ENCODE measurements at regions of chr7 and their contacts with region 1.

Region 1: GRCh38 chr7:37916673-37917660 is at the start of gene SFRP4:
- H3K4me3 Mint-ChIP-seq: peak within 1 kb of the TSS; percentile 68
- H3K27ac Mint-ChIP-seq: peak within 1 kb of the TSS; percentile 11
- H3K4me1 Mint-ChIP-seq: peaks cover 48% of the 10 kb centered on the region
- H3K27me3 Mint-ChIP-seq: peaks cover 64% of the 10 kb centered on the region

Region 2: DNA sequence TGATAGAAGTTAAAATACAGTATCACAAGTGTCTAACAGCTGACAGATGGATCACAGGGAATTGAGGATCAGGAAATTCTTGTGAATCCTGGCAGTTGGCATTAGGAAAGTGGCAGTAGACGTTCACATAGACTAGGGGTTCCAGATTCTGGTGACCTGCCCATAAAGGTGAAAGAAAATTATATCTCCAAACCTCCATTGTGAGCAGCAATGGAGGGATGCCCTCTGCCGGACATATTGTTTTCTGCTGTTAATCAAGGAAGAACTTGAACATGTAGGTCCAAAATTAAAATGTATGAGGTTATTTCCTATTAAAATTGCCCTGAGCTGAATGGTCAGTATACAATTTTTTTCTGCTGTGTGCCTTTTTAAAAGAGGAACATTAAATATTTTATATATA is 63.5 kb before region 1 on chr7:
- intact Hi-C with region 1: no loop called
- H3K4me3 Mint-ChIP-seq: no peak overlapping the region
- H3K27ac Mint-ChIP-seq: no peak overlapping the region
- H3K4me1 Mint-ChIP-seq: no peaks in the 10 kb centered on the region
- H3K27me3 Mint-ChIP-seq: no peaks in the 10 kb centered on the region

Region 3: DNA sequence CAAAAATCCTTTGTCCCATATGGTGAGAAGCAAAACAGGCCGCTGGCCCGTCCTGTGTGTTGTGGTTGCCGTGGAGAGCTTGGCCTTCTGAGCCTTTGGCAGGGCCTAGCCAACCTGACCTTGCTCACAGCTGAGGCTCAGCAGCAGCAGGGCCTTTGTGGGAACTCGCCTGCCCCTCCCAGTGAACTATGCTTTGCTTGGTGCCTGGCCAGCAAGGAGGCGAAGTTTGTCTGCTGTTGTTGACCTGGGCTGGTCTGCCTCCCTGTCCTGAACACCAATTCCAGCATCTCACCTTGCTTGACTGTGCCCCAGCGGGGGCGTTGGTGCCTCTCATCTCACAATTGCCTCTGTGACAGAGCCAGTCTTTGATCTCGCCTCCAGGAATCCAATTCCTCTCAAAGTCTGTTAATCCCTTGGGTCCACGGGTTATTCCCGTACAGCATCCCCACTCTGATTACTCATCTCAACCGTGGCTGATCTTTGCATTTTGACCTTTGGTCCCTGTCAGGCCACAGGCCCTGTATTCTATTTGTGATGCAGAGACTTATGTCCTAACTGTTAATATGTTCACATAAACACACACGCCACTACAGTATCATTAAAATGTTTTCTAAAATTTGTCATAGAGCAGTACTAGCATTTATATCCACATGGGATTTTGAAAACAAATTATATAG is 26.1 kb after region 1 on chr7:
- intact Hi-C with region 1: no loop called
- H3K4me3 Mint-ChIP-seq: no peak overlapping the region
- H3K27ac Mint-ChIP-seq: no peak overlapping the region
- H3K4me1 Mint-ChIP-seq: no peaks in the 10 kb centered on the region
- H3K27me3 Mint-ChIP-seq: no peaks in the 10 kb centered on the region

Region 4: GRCh38 chr7:37987732-37988131 is 70.8 kb after region 1 on chr7:
- intact Hi-C with region 1: loop called (anchors 5 kb)
- H3K4me3 Mint-ChIP-seq: no peak overlapping the region
- H3K27ac Mint-ChIP-seq: peak overlapping the region; percentile 83
- H3K4me1 Mint-ChIP-seq: peaks cover 40% of the 10 kb centered on the region
- H3K27me3 Mint-ChIP-seq: no peaks in the 10 kb centered on the region

Region 5: DNA sequence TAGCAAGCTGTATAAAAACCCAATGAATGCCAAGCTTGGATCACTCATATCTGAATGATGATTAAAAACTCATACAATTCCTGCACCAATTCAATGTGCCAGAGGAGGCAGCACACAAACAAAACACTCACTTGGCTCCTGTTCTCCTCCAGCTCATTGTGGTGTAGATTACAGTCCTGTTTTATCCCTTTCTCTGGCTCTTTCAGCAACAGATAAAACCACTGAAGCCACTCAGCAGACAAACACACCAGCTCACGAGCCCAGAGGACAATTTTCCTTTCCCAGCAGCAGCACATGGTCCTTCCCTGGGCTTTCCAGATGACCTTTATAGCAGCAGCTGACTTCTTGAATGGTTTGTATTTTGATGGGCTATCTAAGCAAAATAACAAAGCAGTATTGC is 153.8 kb after region 1 on chr7:
- intact Hi-C with region 1: loop called (anchors 10 kb)
- H3K4me3 Mint-ChIP-seq: no peak overlapping the region
- H3K27ac Mint-ChIP-seq: no peak overlapping the region
- H3K4me1 Mint-ChIP-seq: peaks cover 5% of the 10 kb centered on the region
- H3K27me3 Mint-ChIP-seq: no peaks in the 10 kb centered on the region

Region 6: DNA sequence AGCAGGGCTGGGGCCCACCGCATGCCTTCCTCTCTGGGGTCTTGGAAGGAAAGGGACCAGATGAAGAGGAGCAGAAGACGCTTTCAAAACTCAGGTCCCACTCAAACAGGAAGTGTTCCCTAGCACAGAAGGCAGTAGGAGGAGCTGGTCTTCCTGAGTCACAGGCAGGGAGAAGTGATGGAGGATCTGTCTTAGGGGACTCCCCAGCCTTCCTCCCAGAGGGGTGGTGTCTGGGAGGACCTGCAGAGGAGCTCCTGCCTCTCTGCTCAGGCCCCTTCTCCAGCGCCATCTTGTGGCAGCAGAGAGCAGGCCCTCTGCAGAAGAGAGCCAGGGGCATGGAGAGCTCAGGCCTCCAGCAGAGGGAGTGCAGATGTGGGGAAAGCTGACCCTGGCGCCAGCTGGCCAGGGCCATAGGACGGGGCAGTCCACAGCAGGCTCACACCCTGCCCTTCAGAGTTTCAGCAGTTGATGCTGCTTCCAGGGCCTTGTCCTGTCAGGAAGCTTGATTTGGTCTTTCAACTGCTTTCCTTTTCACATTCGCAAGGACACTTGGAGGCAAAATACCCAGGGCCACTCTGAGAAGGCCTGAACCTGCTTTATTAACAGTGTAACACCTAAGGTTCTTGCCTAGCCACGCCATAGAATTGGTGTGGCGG is 418.7 kb after region 1 on chr7:
- intact Hi-C with region 1: loop called (anchors 10 kb)
- H3K4me3 Mint-ChIP-seq: peak overlapping the region; percentile 77
- H3K27ac Mint-ChIP-seq: peak overlapping the region; percentile 97
- H3K4me1 Mint-ChIP-seq: peaks cover 86% of the 10 kb centered on the region
- H3K27me3 Mint-ChIP-seq: no peaks in the 10 kb centered on the region